HepG2 (cell line): ENCODE measurements at regions of chr13 and their contacts with region 1.

Region 1: GRCh38 chr13:30132623-30133553 is 174.5 kb downstream of the KATNAL1 start:
- DNase-seq: peak; percentile 80
- ATAC-seq: peak; percentile 97
- H3K4me3 ChIP-seq: peak overlapping the region in 1 of 3 experiments; percentile 20; a peak in 1 of 6 replicates
- H3K27ac ChIP-seq: no peak overlapping the region
- H3K4me1 ChIP-seq: peaks cover 9% of the 10 kb centered on the region; the same call in 1 of the 2 replicates
- H3K27me3 ChIP-seq: peaks cover 0 to 19% of the 10 kb centered on the region in 2 experiments; a peak in 3 of 5 replicates
- CTCF ChIP-seq: peak; percentile 94
- EP300 ChIP-seq: no peak
- POLR2A ChIP-seq: no peak
- RAD21 ChIP-seq: peak; percentile 86

Region 2: GRCh38 chr13:30306762-30307193 is 173.9 kb after region 1 on chr13:
- CTCF ChIA-PET with region 1: no interaction called
- POLR2A ChIA-PET with region 1: no interaction called
- in situ Hi-C with region 1: no loop called
- intact Hi-C with region 1: no loop called
- DNase-seq: peak; percentile 87
- ATAC-seq: peak; percentile 91
- H3K4me3 ChIP-seq: peak overlapping the region; percentile 81 to 93 (median 88)
- H3K27ac ChIP-seq: peak overlapping the region; percentile 90
- H3K4me1 ChIP-seq: peaks cover 51% of the 10 kb centered on the region
- H3K27me3 ChIP-seq: no peaks in the 10 kb centered on the region; a peak in 1 of 5 replicates
- CTCF ChIP-seq: no peak
- EP300 ChIP-seq: no peak
- POLR2A ChIP-seq: peak; percentile 34 to 51; a peak in 2 of 4 replicates
- RAD21 ChIP-seq: no peak

Region 3: DNA sequence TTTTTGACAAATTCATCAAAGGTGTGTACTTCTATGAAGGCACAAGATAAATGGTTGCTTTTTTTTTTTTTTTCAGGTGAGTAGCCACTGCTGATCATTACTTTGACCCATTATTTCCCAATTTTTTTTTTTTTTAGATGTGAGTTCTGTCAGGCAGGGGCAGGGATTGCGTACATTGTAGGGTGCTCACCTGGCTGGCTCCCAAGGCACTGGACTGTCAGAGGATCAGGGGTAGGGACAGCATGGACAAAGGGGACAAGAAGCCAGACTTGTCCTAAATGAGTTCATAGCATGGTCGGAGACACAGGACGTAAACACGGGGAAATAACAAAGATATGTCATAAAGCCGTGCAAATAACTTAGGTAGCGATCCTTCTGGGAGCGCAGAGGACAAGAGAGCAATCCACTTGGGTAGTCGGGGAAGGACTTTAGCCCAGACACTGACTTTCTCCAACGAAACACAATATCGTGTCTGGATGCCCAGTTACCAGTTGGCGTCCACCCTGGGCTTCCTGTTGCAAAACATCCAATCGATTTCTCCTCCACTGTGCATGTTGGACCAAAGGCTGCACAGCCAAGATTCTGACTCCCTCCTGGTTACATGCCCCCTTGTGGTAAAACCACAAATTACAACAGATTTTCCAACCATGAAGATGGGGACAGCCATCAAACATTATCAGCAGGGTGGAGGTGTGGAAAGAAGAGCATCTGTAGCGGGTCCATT is 201.9 kb after region 1 on chr13:
- CTCF ChIA-PET with region 1: interaction called, 28 read pairs
- POLR2A ChIA-PET with region 1: no interaction called
- in situ Hi-C with region 1: loop called (anchors 5 kb)
- intact Hi-C with region 1: loop called (anchors 1 kb)
- DNase-seq: peak; percentile 80
- ATAC-seq: peak; percentile 98
- H3K4me3 ChIP-seq: peak overlapping the region in 1 of 3 experiments; percentile 45; a peak in 2 of 6 replicates
- H3K27ac ChIP-seq: no peak overlapping the region
- H3K4me1 ChIP-seq: peaks cover 18% of the 10 kb centered on the region
- H3K27me3 ChIP-seq: 0 out of 5 replicates have a peak, but pooled peaks cover 0 to 9% of the 10 kb centered on the region in 2 experiments
- CTCF ChIP-seq: peak; percentile 92
- EP300 ChIP-seq: no peak
- POLR2A ChIP-seq: no peak
- RAD21 ChIP-seq: peak; percentile 85

Region 4: DNA sequence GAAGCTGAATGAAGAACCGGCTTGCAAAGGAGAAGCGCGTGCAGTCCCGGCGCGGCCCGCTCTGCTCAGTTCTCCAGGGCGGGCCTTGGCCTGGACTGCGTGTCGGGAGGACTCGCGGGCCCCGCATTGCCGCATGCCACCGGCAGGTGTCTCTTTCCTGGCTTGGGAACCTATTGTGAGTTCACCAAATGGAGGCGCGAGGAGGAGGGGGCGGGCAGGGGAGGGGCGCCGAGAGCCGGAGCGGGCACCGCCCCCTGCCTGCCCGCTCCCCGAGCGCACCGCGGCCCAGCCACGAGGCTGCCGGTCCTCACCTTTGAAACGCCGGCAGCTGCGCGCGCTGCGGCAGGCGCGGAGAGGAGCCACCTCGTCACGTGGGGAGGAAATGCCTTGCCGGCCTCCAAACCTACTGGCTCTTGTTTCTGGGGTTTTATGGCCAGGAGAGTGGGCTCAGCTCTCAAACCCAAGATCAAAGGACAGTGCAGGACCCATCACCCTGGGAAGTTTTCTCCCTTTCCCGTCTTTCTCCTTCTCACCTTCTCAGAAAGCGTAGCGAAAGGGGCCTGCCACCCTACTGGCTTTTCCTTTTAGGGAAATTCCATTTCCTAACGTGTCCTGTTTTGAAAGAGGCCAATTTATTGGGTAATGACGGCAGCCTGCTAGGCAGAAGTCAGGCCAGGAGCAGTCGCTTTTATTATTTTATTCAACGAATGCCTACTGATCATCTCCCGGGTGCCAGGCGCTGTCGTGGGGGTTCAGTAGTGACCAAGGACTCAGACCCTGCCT is 275.6 kb after region 1 on chr13:
- CTCF ChIA-PET with region 1: no interaction called
- POLR2A ChIA-PET with region 1: no interaction called
- in situ Hi-C with region 1: no loop called
- intact Hi-C with region 1: loop called (anchors 1 kb)
- DNase-seq: peak; percentile 86
- ATAC-seq: peak; percentile 97
- H3K4me3 ChIP-seq: peak overlapping the region in 2 of 3 experiments; percentile 34 to 61; a peak in 2 of 6 replicates
- H3K27ac ChIP-seq: no peak overlapping the region
- H3K4me1 ChIP-seq: peaks cover 36% of the 10 kb centered on the region
- H3K27me3 ChIP-seq: peaks cover 1 to 26% of the 10 kb centered on the region in 2 experiments; a peak in 3 of 5 replicates
- CTCF ChIP-seq: peak; percentile 80
- EP300 ChIP-seq: no peak
- POLR2A ChIP-seq: no peak
- RAD21 ChIP-seq: peak; percentile 47; the same call in 1 of the 2 replicates

Region 5: DNA sequence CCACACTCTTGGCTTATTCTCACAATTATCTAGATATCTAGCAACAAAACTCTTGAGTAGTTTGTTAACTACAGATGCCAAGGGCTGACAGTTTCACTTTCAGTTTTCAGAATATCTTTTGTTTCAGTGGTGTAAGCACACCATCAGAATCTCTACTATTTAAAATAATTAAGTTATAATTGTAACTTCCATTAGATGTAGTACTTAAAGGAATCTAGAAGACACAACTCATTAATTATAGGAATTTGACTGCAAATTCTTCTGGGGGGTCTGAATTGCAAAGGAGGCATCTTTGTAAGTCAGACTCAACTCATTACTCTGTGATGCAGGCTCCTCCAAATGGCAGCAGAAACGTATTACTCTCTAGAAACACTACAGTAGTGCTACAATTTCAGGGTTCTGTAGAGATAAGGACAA is 440.0 kb after region 1 on chr13:
- CTCF ChIA-PET with region 1: no interaction called
- POLR2A ChIA-PET with region 1: no interaction called
- in situ Hi-C with region 1: no loop called
- intact Hi-C with region 1: loop called (anchors 10 kb)
- DNase-seq: peak; percentile 12
- ATAC-seq: peak; percentile 74
- H3K4me3 ChIP-seq: peak overlapping the region; percentile 11 to 61 (median 34); a peak in 5 of 6 replicates
- H3K27ac ChIP-seq: no peak overlapping the region
- H3K4me1 ChIP-seq: peaks cover 10% of the 10 kb centered on the region; the same call in 1 of the 2 replicates
- H3K27me3 ChIP-seq: no peaks in the 10 kb centered on the region
- CTCF ChIP-seq: peak; percentile 42
- EP300 ChIP-seq: no peak
- POLR2A ChIP-seq: no peak
- RAD21 ChIP-seq: no peak